SK-N-SH (cell line): ENCODE measurements at regions of chr15 and their contacts with region 1.

Region 1: DNA sequence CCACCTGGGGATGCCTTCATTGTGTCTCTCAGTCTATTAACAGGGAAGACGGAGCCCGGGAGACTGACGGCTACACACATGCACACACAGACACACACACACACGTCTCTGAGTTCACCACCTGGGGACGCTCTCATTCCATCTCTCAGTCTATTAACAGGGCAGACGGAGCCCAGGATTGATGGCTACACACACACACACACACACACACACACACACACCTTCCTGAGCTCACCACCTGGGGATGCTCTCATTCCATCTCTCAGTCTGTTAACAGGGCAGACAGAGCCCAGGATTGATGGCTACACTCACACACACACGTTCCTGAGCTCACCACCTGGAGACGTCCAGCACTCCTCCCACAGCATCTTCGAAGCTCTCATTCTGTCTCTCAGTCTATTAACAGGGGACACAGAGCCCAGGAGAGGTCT is 143.9 kb downstream of the OR4M2 start:
- DNase-seq: no peak
- H3K4me3 ChIP-seq: no peak overlapping the region
- H3K27ac ChIP-seq: no peak overlapping the region
- H3K4me1 ChIP-seq: no peaks in the 10 kb centered on the region; a peak in 1 of 4 replicates
- H3K27me3 ChIP-seq: peaks cover 7% of the 10 kb centered on the region; the same call in 1 of the 2 replicates
- CTCF ChIP-seq: no peak
- EP300 ChIP-seq: no peak
- RAD21 ChIP-seq: peak; percentile 47

Region 2: GRCh38 chr15:20356444-20356910 is 1867.8 kb before region 1 on chr15:
- CTCF ChIA-PET with region 1: interaction called, 81 read pairs
- POLR2A ChIA-PET with region 1: interaction called, 4 read pairs
- DNase-seq: peak; percentile 88
- H3K4me3 ChIP-seq: peak overlapping the region; percentile 39 to 54
- H3K27ac ChIP-seq: no peak overlapping the region
- H3K4me1 ChIP-seq: peaks cover 0 to 7% of the 10 kb centered on the region in 2 experiments; a peak in 1 of 4 replicates
- H3K27me3 ChIP-seq: peaks cover 32% of the 10 kb centered on the region; the same call in 1 of the 2 replicates
- CTCF ChIP-seq: peak; percentile 90
- EP300 ChIP-seq: no peak
- RAD21 ChIP-seq: peak; percentile 95

Region 3: GRCh38 chr15:22236469-22236868 is 12.2 kb after region 1 on chr15:
- CTCF ChIA-PET with region 1: interaction called, 11 read pairs
- POLR2A ChIA-PET with region 1: no interaction called
- DNase-seq: no peak
- H3K4me3 ChIP-seq: no peak overlapping the region
- H3K27ac ChIP-seq: no peak overlapping the region
- H3K4me1 ChIP-seq: no peaks in the 10 kb centered on the region; a peak in 1 of 4 replicates
- H3K27me3 ChIP-seq: no peaks in the 10 kb centered on the region; the same call in 1 of the 2 replicates
- CTCF ChIP-seq: no peak
- EP300 ChIP-seq: no peak
- RAD21 ChIP-seq: no peak

Region 4: GRCh38 chr15:22806664-22807063 is 582.4 kb after region 1 on chr15:
- CTCF ChIA-PET with region 1: no interaction called
- POLR2A ChIA-PET with region 1: no interaction called
- DNase-seq: no peak
- H3K4me3 ChIP-seq: no peak overlapping the region
- H3K27ac ChIP-seq: no peak overlapping the region
- H3K4me1 ChIP-seq: peaks cover 0 to 6% of the 10 kb centered on the region in 2 experiments; a peak in 1 of 4 replicates
- H3K27me3 ChIP-seq: no peaks in the 10 kb centered on the region
- CTCF ChIP-seq: no peak
- EP300 ChIP-seq: no peak
- RAD21 ChIP-seq: no peak